Lower leg skin (tissue), 4 donors: ENCODE measurements at regions of chr3 and their contacts with region 1.

Region 1: DNA sequence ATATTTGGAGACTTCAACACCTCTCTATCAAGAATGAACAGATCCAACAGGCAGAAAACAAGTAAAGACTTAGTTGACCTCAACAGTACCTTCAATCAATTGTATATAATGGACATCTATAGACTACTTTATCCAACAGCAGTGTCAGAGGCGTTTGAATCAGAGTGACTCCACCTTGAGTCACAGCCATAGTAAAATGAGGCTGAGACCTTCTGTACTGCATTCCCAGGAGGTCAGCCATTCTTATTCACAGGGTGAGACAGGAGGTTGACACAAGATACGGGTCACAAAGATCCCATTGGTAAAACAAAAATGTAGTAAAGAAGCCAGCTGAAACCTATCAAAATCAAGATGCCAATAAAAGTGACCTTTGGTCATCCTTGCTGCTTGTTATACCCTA is 299.8 kb downstream of the CNTN3 start:
- DNase-seq: no peak
- H3K4me3 ChIP-seq: no peak overlapping the region
- CTCF ChIP-seq: no peak
- POLR2A ChIP-seq: no peak

Region 2: DNA sequence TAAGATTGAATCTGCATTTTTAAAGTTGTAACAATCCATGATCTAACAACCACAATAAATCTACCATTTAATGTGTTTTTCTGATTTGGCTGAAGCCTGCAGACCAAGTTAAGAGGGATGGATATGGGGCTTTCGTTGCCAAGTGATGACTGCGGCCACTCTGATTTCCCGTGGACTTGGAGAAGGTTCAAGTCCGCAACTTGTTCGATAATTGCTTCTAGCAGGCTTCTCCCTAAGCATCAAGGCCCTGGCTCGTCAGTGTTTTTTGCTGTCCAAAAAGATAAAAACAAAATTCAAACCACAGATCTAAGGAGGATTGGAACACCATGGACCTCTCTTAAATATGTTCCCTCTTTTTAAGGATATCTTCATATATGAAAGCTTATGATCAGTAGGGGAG is 43.2 kb after region 1 on chr3:
- intact Hi-C with region 1: loop called (anchors 1 kb)
- DNase-seq: no peak
- H3K4me3 ChIP-seq: no peak overlapping the region
- CTCF ChIP-seq: no peak
- POLR2A ChIP-seq: no peak

Region 3: GRCh38 chr3:75886971-75887526 is 1572.4 kb after region 1 on chr3:
- intact Hi-C with region 1: no loop called
- DNase-seq: no peak
- H3K4me3 ChIP-seq: no peak overlapping the region
- CTCF ChIP-seq: no peak
- POLR2A ChIP-seq: no peak